ENCODE measurements at regions of chr9 and their contacts with region 1.

Region 1: GRCh38 chr9:100714372-100715099 is 136.7 kb downstream of the CAVIN4 start:
- DNase-seq: peak; percentile 17 to 88
- H3K4me3 ChIP-seq: no peak overlapping the region
- H3K27ac ChIP-seq: no peak overlapping the region
- H3K4me1 ChIP-seq: no peaks in the 10 kb centered on the region
- H3K27me3 ChIP-seq: no peaks in the 10 kb centered on the region
- CTCF ChIP-seq: peak; percentile 76 to 85 (median 83)
- EP300 ChIP-seq: no peak
- POLR2A ChIP-seq: no peak
- RAD21 ChIP-seq: peak; percentile 95 to 97

Region 2: GRCh38 chr9:101235105-101235866 is 520.8 kb after region 1 on chr9:
- CTCF ChIA-PET with region 1: interaction called, 34 read pairs
- POLR2A ChIA-PET with region 1: no interaction called
- DNase-seq: no peak
- H3K4me3 ChIP-seq: no peak overlapping the region
- H3K27ac ChIP-seq: no peak overlapping the region
- H3K4me1 ChIP-seq: peaks cover 0 to 20% (median 2%) of the 10 kb centered on the region in 4 experiments; a peak in 4 of 7 replicates
- H3K27me3 ChIP-seq: no peaks in the 10 kb centered on the region
- CTCF ChIP-seq: peak in 2 of 3 experiments; percentile 55 to 58; a peak in 2 of 4 replicates
- EP300 ChIP-seq: no peak
- POLR2A ChIP-seq: no peak
- RAD21 ChIP-seq: peak; percentile 89 to 92

Region 3: GRCh38 chr9:101311758-101312420 is 597.4 kb after region 1 on chr9:
- CTCF ChIA-PET with region 1: interaction called, 35 read pairs
- POLR2A ChIA-PET with region 1: no interaction called
- DNase-seq: no peak
- H3K4me3 ChIP-seq: no peak overlapping the region
- H3K27ac ChIP-seq: no peak overlapping the region
- H3K4me1 ChIP-seq: no peaks in the 10 kb centered on the region
- H3K27me3 ChIP-seq: no peaks in the 10 kb centered on the region
- CTCF ChIP-seq: peak in 2 of 3 experiments; percentile 53 to 65; a peak in 2 of 4 replicates
- EP300 ChIP-seq: no peak
- POLR2A ChIP-seq: no peak
- RAD21 ChIP-seq: peak; percentile 80 to 83